Activated T-helper 1 cell treated with anti-CD3 and anti-CD28 coated beads, Interleukin-12 subunit alpha, Interleukin-12 subunit beta, Interleukin-2, Interleukin-4 antibody, amounts not matched to agents 30 ng/mL and 10 ng/mL and 1 ng/mL, durations not matched to agents 14 hours and 24 hours and 36 hours (primary cell): ENCODE measurements at regions of chr2 and their contacts with region 1.

Region 1: DNA sequence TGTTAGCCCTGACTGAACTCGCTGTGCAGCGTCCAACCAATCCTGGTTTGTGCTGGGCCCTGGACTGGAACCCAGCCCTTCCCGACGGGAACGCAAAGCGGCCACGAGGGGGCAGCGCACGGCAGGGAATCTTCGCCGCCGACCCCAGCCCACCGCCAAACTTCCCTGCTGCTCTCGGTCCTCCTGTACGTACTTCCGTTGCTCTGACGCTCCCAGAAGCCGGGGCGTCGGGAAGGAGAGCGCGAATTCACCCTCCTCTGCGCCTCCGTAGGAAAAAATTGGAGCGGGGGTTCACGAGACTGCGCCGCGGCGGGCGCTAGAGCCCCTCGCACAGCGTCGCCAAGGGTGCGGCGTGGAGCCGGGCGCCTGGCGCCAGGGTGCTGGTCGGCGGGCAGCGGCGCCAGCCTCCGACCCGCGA is 948 bp upstream of the SH3RF3 start:
- DNase-seq: peak; percentile 21
- H3K4me3 Mint-ChIP-seq: peak overlapping the region; percentile 59
- H3K27ac Mint-ChIP-seq: no peak overlapping the region
- H3K4me1 Mint-ChIP-seq: peaks cover 22% of the 10 kb centered on the region
- H3K27me3 Mint-ChIP-seq: peaks cover 50% of the 10 kb centered on the region

Region 2: DNA sequence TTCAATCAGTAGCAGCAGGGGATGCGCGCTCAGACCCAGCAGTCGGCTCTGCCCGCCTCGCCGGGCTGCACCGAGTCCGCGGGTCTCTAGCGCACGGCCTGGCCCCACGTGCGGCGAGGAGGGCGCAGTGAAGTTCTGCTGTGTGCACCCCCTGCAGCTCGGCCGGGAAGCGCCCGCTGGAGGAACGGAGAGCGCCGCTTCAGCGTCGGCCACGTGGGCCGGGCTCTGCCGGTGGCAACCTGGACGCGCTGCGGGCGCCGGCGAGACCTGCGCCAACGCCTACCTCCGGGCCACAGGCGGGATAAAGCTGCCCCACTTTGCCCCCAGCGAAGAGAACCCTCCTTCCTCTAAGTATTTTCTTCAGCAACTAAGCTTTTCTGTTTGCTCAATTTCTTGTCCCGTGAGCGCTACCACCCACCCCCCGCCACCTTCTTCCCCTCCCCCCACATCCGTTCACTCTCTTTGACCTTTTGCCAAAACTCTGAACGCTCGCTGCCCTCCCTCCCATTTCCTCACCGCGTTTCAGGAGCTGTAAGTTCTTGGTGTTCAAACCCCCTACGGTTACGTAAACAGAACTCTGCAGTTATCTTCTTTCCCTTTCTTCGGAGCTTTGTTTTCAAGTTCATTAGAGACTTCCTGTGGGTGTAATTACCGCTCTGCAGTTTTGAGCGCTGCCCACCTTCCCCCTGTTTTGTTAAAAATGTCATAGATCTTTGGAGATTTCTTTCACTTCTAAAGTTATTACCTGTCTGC is 96.4 kb before region 1 on chr2:
- intact Hi-C with region 1: loop called (anchors 5 kb)
- DNase-seq: peak; percentile 38
- H3K4me3 Mint-ChIP-seq: peak overlapping the region; percentile 86
- H3K27ac Mint-ChIP-seq: peak overlapping the region; percentile 89
- H3K4me1 Mint-ChIP-seq: peaks cover 27% of the 10 kb centered on the region
- H3K27me3 Mint-ChIP-seq: no peaks in the 10 kb centered on the region

Region 3: GRCh38 chr2:109284826-109285225 is 156.8 kb after region 1 on chr2:
- intact Hi-C with region 1: loop called (anchors 5 kb)
- DNase-seq: no peak
- H3K4me3 Mint-ChIP-seq: no peak overlapping the region
- H3K27ac Mint-ChIP-seq: no peak overlapping the region
- H3K4me1 Mint-ChIP-seq: no peaks in the 10 kb centered on the region
- H3K27me3 Mint-ChIP-seq: peaks cover 11% of the 10 kb centered on the region

Region 4: GRCh38 chr2:109510136-109511028 is 382.3 kb after region 1 on chr2:
- intact Hi-C with region 1: loop called (anchors 1 kb)
- DNase-seq: peak; percentile 51
- H3K4me3 Mint-ChIP-seq: no peak overlapping the region
- H3K27ac Mint-ChIP-seq: no peak overlapping the region
- H3K4me1 Mint-ChIP-seq: peaks cover 9% of the 10 kb centered on the region
- H3K27me3 Mint-ChIP-seq: no peaks in the 10 kb centered on the region